ENCODE measurements at regions of chr2 and their contacts with region 1.

Region 1: GRCh38 chr2:97806738-97807618 is 93.6 kb downstream of the ZAP70 start:
- DNase-seq: peak; percentile 90
- ATAC-seq: peak; percentile 98
- H3K4me3 Mint-ChIP-seq: no peak overlapping the region
- H3K27ac Mint-ChIP-seq: no peak overlapping the region
- H3K4me1 Mint-ChIP-seq: peaks cover 3% of the 10 kb centered on the region
- H3K27me3 Mint-ChIP-seq: no peaks in the 10 kb centered on the region
- CTCF ChIP-seq: peak; percentile 94

Region 2: DNA sequence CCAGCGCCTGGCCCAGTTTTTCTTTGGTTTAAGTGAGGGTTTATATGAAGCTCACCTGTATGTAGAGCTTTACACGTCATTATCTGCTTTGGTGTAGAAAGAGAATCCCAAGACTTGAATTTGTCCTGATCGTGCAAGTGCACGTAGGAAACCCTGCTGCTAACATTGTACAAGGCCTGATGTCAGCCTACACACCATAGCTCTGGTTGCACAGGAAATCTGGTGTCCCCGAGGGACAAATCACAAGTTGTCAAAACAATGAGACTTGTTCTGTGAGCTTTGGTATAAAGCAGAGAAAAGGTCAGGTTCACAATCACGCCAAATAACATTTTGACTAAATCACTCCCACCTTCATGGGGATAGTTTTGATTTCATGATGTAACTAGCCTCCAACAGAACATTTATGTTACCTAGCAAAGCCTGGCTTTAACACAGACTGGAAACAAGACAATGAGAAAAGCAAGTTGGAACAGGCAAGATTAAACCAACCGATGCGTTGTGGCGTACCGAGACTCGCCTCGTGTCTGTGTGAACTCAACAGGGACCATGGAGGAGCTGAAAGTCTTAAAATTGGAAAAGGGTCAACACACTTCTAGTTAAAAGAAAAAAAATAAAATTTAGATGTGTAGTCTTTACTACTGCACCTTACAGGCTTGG is 52.2 kb before region 1 on chr2:
- CTCF ChIA-PET with region 1: no interaction called
- POLR2A ChIA-PET with region 1: no interaction called
- intact Hi-C with region 1: no loop called
- DNase-seq: no peak
- ATAC-seq: no peak
- H3K4me3 Mint-ChIP-seq: no peak overlapping the region
- H3K27ac Mint-ChIP-seq: no peak overlapping the region
- H3K4me1 Mint-ChIP-seq: peaks cover 7% of the 10 kb centered on the region
- H3K27me3 Mint-ChIP-seq: no peaks in the 10 kb centered on the region
- CTCF ChIP-seq: no peak

Region 3: GRCh38 chr2:97796465-97797126 is 10.4 kb before region 1 on chr2:
- CTCF ChIA-PET with region 1: interaction called, 14 read pairs
- POLR2A ChIA-PET with region 1: interaction called, 3 read pairs
- intact Hi-C with region 1: no loop called
- DNase-seq: no peak
- ATAC-seq: no peak
- H3K4me3 Mint-ChIP-seq: no peak overlapping the region
- H3K27ac Mint-ChIP-seq: no peak overlapping the region
- H3K4me1 Mint-ChIP-seq: no peaks in the 10 kb centered on the region
- H3K27me3 Mint-ChIP-seq: no peaks in the 10 kb centered on the region
- CTCF ChIP-seq: no peak

Region 4: DNA sequence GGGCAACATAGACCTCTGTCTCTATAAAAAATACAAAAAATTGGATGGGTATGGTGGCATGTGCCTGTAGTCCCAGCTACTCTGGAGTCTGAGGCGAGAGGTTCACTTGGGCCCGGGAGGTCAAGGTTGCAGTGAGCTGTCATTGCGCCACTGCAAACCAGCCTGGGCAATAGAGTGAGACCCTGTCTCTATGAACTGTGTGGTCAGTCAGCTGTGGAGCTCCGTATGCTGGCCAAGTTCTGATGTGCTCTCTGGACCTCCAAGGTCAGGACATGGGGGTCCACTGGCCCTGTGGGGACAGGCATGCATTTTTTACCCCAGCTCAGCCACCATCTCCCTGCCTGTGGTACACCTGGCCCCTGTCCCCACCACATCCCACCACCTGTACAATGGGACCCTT is 117.2 kb after region 1 on chr2:
- CTCF ChIA-PET with region 1: no interaction called
- POLR2A ChIA-PET with region 1: no interaction called
- intact Hi-C with region 1: no loop called
- DNase-seq: no peak
- ATAC-seq: no peak
- H3K4me3 Mint-ChIP-seq: no peak overlapping the region
- H3K27ac Mint-ChIP-seq: no peak overlapping the region
- H3K4me1 Mint-ChIP-seq: peaks cover 5% of the 10 kb centered on the region
- H3K27me3 Mint-ChIP-seq: no peaks in the 10 kb centered on the region
- CTCF ChIP-seq: no peak

Region 5: GRCh38 chr2:97969081-97970067 is 162.4 kb after region 1 on chr2:
- CTCF ChIA-PET with region 1: no interaction called
- POLR2A ChIA-PET with region 1: no interaction called
- intact Hi-C with region 1: no loop called
- DNase-seq: no peak
- ATAC-seq: peak; percentile 35
- H3K4me3 Mint-ChIP-seq: no peak overlapping the region
- H3K27ac Mint-ChIP-seq: no peak overlapping the region
- H3K4me1 Mint-ChIP-seq: peaks cover 61% of the 10 kb centered on the region
- H3K27me3 Mint-ChIP-seq: no peaks in the 10 kb centered on the region
- CTCF ChIP-seq: no peak

Region 6: GRCh38 chr2:97995734-97996624 is 189.0 kb after region 1 on chr2 and contains the start of gene TMEM131:
- CTCF ChIA-PET with region 1: interaction called, 3 read pairs
- POLR2A ChIA-PET with region 1: no interaction called
- intact Hi-C with region 1: loop called (anchors 5 kb)
- DNase-seq: peak; percentile 95
- ATAC-seq: peak; percentile 85
- H3K4me3 Mint-ChIP-seq: peak within 1 kb of the TSS; percentile 93
- H3K27ac Mint-ChIP-seq: peak within 1 kb of the TSS; percentile 93
- H3K4me1 Mint-ChIP-seq: peaks cover 30% of the 10 kb centered on the region
- H3K27me3 Mint-ChIP-seq: no peaks in the 10 kb centered on the region
- CTCF ChIP-seq: no peak
- total RNA-seq, gene TMEM131: 24.2 to 27.4 TPM

Region 7: GRCh38 chr2:98269274-98269673 is 462.3 kb after region 1 on chr2:
- CTCF ChIA-PET with region 1: interaction called, 10 read pairs
- POLR2A ChIA-PET with region 1: no interaction called
- intact Hi-C with region 1: no loop called
- DNase-seq: peak; percentile 12
- ATAC-seq: peak; percentile 51
- H3K4me3 Mint-ChIP-seq: no peak overlapping the region
- H3K27ac Mint-ChIP-seq: no peak overlapping the region
- H3K4me1 Mint-ChIP-seq: no peaks in the 10 kb centered on the region
- H3K27me3 Mint-ChIP-seq: peaks cover 7% of the 10 kb centered on the region
- CTCF ChIP-seq: peak; percentile 70